ENCODE measurements at regions of chr1 and their contacts with region 1.

Region 1: GRCh38 chr1:168342572-168343280 is 62.0 kb downstream of the TBX19 start:
- DNase-seq: peak; percentile 71
- H3K4me3 ChIP-seq: peak overlapping the region; percentile 23 to 40; a peak in 3 of 4 replicates
- H3K27ac ChIP-seq: peak overlapping the region in 1 of 2 experiments; percentile 71; a peak in 1 of 4 replicates
- H3K4me1 ChIP-seq: peaks cover 0 to 7% of the 10 kb centered on the region in 2 experiments; a peak in 2 of 4 replicates
- H3K27me3 ChIP-seq: no peaks in the 10 kb centered on the region
- CTCF ChIP-seq: peak; percentile 68
- EP300 ChIP-seq: no peak
- RAD21 ChIP-seq: peak; percentile 86

Region 2: GRCh38 chr1:168304865-168305264 is 37.9 kb before region 1 on chr1:
- CTCF ChIA-PET with region 1: interaction called, 12 read pairs
- POLR2A ChIA-PET with region 1: no interaction called
- DNase-seq: no peak
- H3K4me3 ChIP-seq: no peak overlapping the region
- H3K27ac ChIP-seq: no peak overlapping the region
- H3K4me1 ChIP-seq: peaks cover 0 to 7% of the 10 kb centered on the region in 2 experiments; a peak in 1 of 4 replicates
- H3K27me3 ChIP-seq: no peaks in the 10 kb centered on the region
- CTCF ChIP-seq: no peak
- EP300 ChIP-seq: no peak
- RAD21 ChIP-seq: no peak

Region 3: GRCh38 chr1:168328731-168329399 is 13.9 kb before region 1 on chr1:
- CTCF ChIA-PET with region 1: interaction called, 48 read pairs
- POLR2A ChIA-PET with region 1: no interaction called
- DNase-seq: no peak
- H3K4me3 ChIP-seq: no peak overlapping the region
- H3K27ac ChIP-seq: no peak overlapping the region
- H3K4me1 ChIP-seq: no peaks in the 10 kb centered on the region
- H3K27me3 ChIP-seq: no peaks in the 10 kb centered on the region
- CTCF ChIP-seq: no peak
- EP300 ChIP-seq: no peak
- RAD21 ChIP-seq: no peak

Region 4: GRCh38 chr1:168365719-168366479 is 23.2 kb after region 1 on chr1:
- CTCF ChIA-PET with region 1: interaction called, 20 read pairs
- POLR2A ChIA-PET with region 1: no interaction called
- DNase-seq: no peak
- H3K4me3 ChIP-seq: no peak overlapping the region
- H3K27ac ChIP-seq: no peak overlapping the region
- H3K4me1 ChIP-seq: no peaks in the 10 kb centered on the region; a peak in 1 of 4 replicates
- H3K27me3 ChIP-seq: no peaks in the 10 kb centered on the region
- CTCF ChIP-seq: no peak
- EP300 ChIP-seq: no peak
- RAD21 ChIP-seq: no peak

Region 5: DNA sequence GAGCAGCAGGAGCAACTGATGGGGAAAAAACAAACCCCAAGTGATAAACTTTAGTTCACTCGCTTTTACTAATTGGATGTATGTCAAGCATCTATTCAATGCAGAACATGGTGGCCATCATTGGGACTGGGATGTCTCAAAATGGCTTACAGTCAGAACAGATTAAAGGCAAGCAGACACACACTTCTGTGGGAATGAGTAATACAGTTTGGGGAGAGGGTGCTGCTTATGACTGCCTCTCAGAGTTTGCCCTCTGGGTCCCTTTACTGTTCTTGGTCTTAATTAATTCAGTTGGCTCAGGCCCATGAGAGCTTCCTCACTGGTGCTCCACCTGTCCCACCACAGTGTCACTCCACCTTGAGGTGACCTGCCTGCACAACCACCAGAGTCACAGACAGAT is 57.4 kb after region 1 on chr1:
- CTCF ChIA-PET with region 1: interaction called, 11 read pairs
- POLR2A ChIA-PET with region 1: no interaction called
- DNase-seq: no peak
- H3K4me3 ChIP-seq: no peak overlapping the region
- H3K27ac ChIP-seq: no peak overlapping the region
- H3K4me1 ChIP-seq: peaks cover 15 to 20% of the 10 kb centered on the region in 2 experiments
- H3K27me3 ChIP-seq: no peaks in the 10 kb centered on the region
- CTCF ChIP-seq: no peak
- EP300 ChIP-seq: no peak
- RAD21 ChIP-seq: no peak

Region 6: DNA sequence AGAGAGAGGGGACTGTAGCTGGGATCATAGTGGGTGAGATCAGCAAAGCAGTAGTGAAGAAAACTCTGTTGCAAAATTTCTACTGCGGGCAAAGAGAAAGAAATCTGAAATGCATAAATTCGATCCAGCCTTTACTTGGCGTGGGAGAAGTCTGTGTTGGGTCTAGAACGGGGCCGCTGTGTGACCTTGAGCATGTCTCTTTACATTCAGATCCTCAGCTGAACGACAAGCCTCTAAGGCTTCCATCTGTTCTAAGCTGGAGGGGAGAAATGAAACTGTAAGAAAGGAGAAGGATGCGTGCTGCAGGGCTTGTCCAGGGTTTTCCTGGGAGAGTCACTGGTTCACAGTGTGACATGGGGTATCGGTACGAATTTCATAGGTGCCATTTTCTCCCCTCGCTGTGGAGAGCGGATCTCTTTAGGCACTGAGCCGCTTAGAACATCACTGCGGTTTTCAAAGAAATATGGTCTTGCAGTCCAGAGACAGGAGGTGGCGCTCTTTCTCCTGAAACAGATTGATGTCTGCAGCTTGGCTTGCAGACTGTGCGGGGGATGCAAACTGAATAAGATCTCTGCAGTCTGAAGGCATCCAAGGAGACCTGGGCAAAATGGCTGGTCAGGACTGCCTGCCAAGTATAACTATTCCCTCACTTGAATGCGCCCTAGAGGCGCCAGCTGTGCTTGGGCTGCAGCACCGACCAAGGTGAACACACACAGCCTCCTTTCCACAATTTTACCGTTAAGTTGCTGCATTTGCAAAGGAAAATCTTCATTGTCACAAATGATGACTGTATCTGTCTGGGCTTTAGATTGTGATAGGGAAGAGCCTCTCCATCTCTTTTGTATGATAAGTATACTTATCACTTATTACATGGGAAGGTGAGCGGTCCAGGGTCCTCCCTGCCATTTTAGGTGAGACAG is 97.0 kb after region 1 on chr1:
- CTCF ChIA-PET with region 1: interaction called, 58 read pairs
- POLR2A ChIA-PET with region 1: no interaction called
- DNase-seq: peak; percentile 72
- H3K4me3 ChIP-seq: peak overlapping the region; percentile 34 to 38
- H3K27ac ChIP-seq: peak overlapping the region in 1 of 2 experiments; percentile 86; a peak in 3 of 4 replicates
- H3K4me1 ChIP-seq: peaks cover 0 to 11% of the 10 kb centered on the region in 2 experiments; a peak in 2 of 4 replicates
- H3K27me3 ChIP-seq: no peaks in the 10 kb centered on the region
- CTCF ChIP-seq: peak; percentile 90
- EP300 ChIP-seq: peak; percentile 15 to 21; a peak in 2 of 4 replicates
- RAD21 ChIP-seq: peak; percentile 99

Region 7: GRCh38 chr1:168603501-168604110 is 260.9 kb after region 1 on chr1:
- CTCF ChIA-PET with region 1: interaction called, 16 read pairs
- POLR2A ChIA-PET with region 1: no interaction called
- DNase-seq: peak; percentile 66
- H3K4me3 ChIP-seq: no peak overlapping the region
- H3K27ac ChIP-seq: peak overlapping the region in 1 of 2 experiments; percentile 55; a peak in 2 of 4 replicates
- H3K4me1 ChIP-seq: peaks cover 4 to 5% of the 10 kb centered on the region in 2 experiments; a peak in 3 of 4 replicates
- H3K27me3 ChIP-seq: no peaks in the 10 kb centered on the region
- CTCF ChIP-seq: peak; percentile 90
- EP300 ChIP-seq: 0 out of 4 replicates have a peak, but pooled peaks of 1 of the 2 experiments have one; percentile 11
- RAD21 ChIP-seq: peak; percentile 99